Activated CD4-positive, alpha-beta memory T cell treated with anti-CD3 and anti-CD28 coated beads, Interleukin-2, amount 10 ng/mL, durations not matched to agents 7 days and 5 days (primary cell): ENCODE measurements at regions of chr6 and their contacts with region 1.

Region 1: DNA sequence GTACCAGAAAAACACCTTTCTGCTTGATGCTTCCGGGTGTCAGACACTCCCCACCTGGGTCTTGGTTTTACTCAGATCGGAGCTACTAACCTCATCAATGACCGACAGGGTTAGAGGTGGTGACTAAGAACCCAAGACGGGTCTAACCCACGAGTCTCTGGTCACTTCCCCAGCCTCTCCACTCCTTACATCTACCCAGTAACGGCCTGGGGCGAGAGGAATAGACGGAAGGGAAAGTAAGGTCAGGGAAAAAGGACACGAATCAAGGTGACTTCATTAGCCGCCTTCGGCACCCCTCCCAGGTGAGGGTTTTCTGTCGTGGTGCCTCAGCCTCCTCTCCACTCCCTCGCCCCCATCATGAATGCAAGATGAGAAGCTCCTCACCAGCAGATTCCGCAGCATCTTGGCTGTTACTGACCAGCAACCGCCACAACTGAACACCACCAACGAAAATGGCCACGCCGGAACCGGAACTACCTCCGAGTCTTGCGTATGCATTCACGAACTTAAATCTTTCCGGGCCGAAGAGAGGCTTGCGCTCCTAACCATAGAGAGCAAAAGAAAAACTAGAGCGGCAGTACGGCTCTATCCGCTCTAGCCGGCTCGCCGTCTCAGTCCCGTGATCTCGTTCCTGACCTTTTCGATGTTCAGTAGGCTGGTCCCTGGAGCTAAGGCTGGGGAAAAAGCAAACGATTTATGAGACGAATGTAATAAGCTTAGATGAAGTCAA is at the start of gene COX7A2:
- DNase-seq: peak; percentile 90
- H3K4me3 Mint-ChIP-seq: peak within 1 kb of the TSS; percentile 91
- H3K27ac Mint-ChIP-seq: peak within 1 kb of the TSS; percentile 94
- H3K4me1 Mint-ChIP-seq: peaks cover 35% of the 10 kb centered on the region
- H3K27me3 Mint-ChIP-seq: peaks cover 15% of the 10 kb centered on the region
- total RNA-seq, gene COX7A2: 469 to 471 TPM

Region 2: GRCh38 chr6:75257343-75258087 is 14.0 kb after region 1 on chr6:
- CTCF ChIA-PET with region 1: no interaction called
- POLR2A ChIA-PET with region 1: interaction called, 13 read pairs
- DNase-seq: no peak
- H3K4me3 Mint-ChIP-seq: no peak overlapping the region
- H3K27ac Mint-ChIP-seq: no peak overlapping the region
- H3K4me1 Mint-ChIP-seq: peaks cover 2% of the 10 kb centered on the region
- H3K27me3 Mint-ChIP-seq: no peaks in the 10 kb centered on the region

Region 3: DNA sequence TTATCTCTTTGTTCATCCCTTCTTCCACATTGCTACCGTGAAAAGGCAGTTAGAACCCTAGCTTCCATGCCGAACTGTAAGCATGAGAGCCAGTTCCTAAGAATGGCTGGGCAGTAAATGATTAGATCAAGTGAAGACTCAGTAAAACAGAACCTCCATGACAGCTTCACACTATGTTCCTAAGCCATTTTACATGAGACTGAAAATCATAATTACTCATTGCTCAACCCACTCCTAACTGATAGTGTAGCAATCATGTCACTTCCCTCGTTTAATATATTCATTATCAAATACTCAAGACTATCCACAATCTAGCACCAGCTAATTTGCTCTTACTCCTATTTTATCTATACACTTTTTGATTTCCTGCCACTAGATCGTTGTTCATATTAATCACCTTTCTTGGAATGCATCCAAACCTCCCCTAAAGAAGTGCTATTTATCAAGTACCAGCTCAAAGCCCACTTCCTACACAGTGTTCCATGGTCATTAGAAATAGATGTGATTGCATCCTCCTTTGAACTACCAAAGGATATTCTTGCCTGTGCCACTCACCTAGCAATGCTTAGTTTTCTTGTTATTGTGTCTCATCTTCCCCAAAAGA is 35.1 kb after region 1 on chr6:
- CTCF ChIA-PET with region 1: interaction called, 10 read pairs
- POLR2A ChIA-PET with region 1: interaction called, 72 read pairs
- DNase-seq: no peak
- H3K4me3 Mint-ChIP-seq: no peak overlapping the region
- H3K27ac Mint-ChIP-seq: no peak overlapping the region
- H3K4me1 Mint-ChIP-seq: peaks cover 60% of the 10 kb centered on the region
- H3K27me3 Mint-ChIP-seq: no peaks in the 10 kb centered on the region

Region 4: GRCh38 chr6:75284632-75285286 is 41.3 kb after region 1 on chr6 and contains the start of gene TMEM30A:
- CTCF ChIA-PET with region 1: interaction called, 10 read pairs
- POLR2A ChIA-PET with region 1: interaction called, 72 read pairs
- DNase-seq: peak; percentile 97
- H3K4me3 Mint-ChIP-seq: no peak within 1 kb of the TSS
- H3K27ac Mint-ChIP-seq: no peak within 1 kb of the TSS
- H3K4me1 Mint-ChIP-seq: peaks cover 47% of the 10 kb centered on the region
- H3K27me3 Mint-ChIP-seq: no peaks in the 10 kb centered on the region
- total RNA-seq, gene TMEM30A: 60.1 to 60.4 TPM

Region 5: DNA sequence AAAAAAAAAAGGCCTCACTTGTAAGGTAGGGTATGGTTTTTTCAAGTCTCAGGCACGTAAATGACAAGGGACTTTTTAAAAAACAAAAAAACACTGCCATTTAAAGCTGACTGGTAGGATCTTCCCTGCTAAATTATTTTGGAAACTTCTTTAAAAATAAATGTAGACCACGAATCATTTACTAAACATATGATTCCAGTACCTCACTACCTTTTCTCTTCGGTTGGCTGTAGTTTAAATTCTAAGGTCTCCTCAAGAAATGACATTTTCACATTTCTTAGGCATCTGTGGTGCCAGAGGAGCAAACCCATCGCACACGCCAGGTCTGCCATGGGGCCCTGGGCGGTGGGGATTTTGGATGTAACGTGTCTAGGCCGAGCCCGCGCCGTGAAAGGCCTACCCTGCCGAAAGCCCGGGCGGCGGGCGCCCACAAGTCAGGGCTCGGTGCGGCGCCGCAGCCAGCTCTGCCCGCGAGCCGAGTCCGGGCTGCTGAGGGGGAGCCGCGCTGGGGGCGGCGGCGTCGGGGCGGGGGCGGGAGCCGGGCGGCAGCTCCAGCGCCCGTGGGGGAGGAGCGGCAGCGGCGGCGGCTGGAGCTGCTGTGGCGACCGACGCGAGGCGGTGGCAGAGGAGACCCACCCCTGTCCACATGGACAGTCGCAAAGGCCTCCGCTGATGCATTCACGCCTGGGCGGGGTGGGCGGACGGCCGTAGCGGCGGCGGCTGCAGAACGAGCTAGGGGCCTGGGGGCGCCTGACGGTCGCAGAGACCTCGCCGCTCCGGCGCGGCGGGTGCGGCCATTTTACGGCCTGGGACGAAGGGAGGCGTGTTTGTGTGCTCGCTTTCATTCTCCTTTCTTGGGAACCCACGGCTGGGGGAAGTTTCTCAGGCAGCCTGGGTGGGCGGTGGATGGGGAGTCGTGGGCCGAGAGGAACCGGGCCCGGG is 358.1 kb after region 1 on chr6 and contains the start of gene SENP6:
- CTCF ChIA-PET with region 1: no interaction called
- POLR2A ChIA-PET with region 1: interaction called, 26 read pairs
- DNase-seq: peak; percentile 75
- H3K4me3 Mint-ChIP-seq: peak within 1 kb of the TSS; percentile 90
- H3K27ac Mint-ChIP-seq: peak within 1 kb of the TSS; percentile 88
- H3K4me1 Mint-ChIP-seq: peaks cover 47% of the 10 kb centered on the region
- H3K27me3 Mint-ChIP-seq: no peaks in the 10 kb centered on the region
- total RNA-seq, gene SENP6: 58.6 to 59.2 TPM